ENCODE measurements at regions of chr16 and their contacts with region 1.

Region 1: GRCh38 chr16:3094289-3095027 is 4.6 kb downstream of the ZSCAN10 start:
- DNase-seq: peak; percentile 37
- H3K4me3 ChIP-seq: no peak overlapping the region
- H3K27ac ChIP-seq: no peak overlapping the region
- H3K4me1 ChIP-seq: no peaks in the 10 kb centered on the region
- H3K27me3 ChIP-seq: no peaks in the 10 kb centered on the region
- CTCF ChIP-seq: peak; percentile 68 to 75

Region 2: DNA sequence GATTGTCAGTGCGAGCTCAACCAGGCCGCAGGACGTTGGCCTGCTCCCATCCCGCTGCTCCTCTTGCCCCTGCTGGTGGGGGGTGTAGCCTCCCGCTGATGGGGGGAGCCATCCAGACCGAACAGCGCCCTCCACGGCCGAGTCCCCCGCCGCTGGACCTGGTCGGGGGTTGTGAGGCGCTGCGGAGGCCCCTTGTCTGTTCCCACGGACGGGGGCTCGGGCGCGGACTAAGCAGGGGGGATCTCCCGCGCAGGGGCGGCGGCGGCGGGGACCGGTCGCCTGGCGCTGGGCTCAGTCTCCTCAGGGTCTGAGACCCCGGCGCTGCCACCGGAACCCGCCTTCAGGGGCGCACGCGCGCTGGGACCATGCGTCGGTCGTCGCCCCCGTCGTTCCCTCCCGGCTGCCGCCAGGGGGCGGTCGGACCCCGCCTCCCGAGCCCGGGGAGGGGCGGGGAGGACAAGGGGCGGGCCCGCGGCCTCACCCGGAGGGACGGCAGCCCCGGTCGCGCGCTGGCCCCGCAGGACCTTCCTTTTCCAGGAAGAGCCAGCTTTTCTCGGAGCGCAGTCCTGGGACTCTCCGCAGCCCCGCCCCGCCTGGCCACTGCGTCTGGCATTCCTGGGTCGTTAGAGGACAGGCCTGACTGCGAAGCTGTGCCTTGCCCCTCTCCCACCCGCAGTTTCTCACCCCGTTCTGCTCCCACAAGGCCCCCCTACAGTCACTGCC is 35.3 kb before region 1 on chr16:
- CTCF ChIA-PET with region 1: no interaction called
- dilution Hi-C with region 1: no loop called
- in situ Hi-C with region 1: no loop called
- intact Hi-C with region 1: loop called (anchors 2 kb)
- DNase-seq: peak; percentile 78
- H3K4me3 ChIP-seq: peak overlapping the region; percentile 74 to 99 (median 82)
- H3K27ac ChIP-seq: peak overlapping the region; percentile 29
- H3K4me1 ChIP-seq: peaks cover 13% of the 10 kb centered on the region
- H3K27me3 ChIP-seq: no peaks in the 10 kb centered on the region
- CTCF ChIP-seq: peak; percentile 48 to 71